Adrenal gland (tissue), 19 donors: ENCODE measurements at regions of chr3 and their contacts with region 1.

Region 1: DNA sequence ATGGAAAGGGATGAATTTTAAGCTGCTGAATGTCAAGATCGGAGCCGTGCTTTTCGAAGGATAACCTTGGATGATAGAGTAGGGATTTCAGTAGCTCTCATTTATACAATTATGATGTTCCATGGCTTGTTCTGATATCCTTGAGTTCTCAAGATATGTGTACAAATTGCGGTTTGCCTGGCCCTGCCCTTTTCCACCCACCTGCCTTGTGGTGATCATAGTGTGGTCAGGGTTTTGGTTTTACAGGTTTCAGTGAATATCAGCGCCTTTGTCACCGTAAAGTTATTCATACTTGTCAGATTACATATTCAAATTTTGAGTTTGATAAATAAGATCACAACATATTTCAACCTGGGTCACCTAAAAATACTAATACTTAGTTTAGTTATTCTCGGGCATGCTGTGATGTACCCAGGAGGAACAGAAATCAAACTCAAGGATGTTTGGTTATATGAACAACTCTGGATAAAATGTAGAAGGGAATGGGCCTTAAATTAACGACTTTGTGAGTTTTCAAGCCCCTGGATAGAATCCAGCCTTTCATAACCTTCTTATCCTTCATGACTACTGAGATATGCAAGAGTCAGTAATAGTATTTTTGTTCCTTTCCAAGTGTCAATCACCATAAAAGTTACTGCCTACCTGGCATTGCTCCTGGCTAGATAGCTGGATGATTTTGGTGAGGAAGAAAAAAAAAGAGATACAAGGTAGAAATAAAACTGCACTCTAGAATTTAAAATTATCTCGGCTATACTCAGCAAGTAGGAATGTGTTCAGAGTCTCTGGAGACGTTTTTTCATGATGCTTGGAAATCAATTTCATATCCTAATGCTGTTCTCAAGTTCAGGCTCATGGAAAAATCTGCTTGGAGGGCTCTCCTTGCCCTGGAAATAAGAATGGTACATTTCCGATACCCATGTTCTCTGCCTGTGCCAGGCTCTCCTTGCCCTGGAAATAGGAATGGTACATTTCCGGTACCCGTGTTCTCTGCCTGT is 209.2 kb upstream of the TPRG1 start:
- DNase-seq: no peak
- H3K4me3 ChIP-seq: no peak overlapping the region
- H3K27ac ChIP-seq: no peak overlapping the region
- H3K4me1 ChIP-seq: no peaks in the 10 kb centered on the region
- H3K27me3 ChIP-seq: no peaks in the 10 kb centered on the region
- CTCF ChIP-seq: no peak
- POLR2A ChIP-seq: no peak

Region 2: DNA sequence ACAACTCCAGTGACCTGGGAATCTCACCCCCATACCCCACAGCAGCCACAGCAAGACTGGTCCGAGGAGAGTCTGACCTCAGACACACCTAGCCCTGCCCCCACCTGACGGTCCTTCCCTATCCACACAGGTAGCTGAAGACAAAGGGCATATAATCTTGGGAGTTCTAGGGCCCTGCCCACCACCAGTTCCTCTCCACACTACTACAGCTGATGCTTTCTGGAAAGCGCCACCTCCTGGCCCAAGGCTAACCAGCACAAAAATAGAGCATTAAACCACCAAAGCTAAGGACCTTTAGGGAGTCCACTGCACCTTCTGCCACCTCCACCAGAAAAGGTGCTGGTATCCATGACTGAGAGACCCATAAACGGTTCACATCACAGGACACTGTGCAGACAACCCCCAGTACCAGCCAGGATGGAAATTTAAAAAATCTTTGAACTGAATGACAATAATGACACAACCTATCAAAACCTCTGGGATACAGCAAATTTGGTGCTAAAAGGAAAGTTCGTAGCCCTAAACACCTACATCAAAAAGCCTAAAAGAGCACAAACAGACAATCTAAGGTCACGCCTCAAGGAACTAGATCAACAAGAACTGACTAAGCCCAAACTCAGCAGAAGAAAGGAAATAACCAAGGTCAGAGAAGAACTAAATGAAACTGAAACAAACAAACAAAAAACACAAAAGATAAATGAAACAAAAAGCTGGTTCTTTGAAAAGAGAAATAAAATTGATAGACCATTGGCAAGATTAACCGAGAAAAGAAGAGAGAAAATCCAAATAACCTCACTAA is 87.1 kb after region 1 on chr3:
- intact Hi-C with region 1: no loop called
- DNase-seq: no peak
- H3K4me3 ChIP-seq: no peak overlapping the region
- H3K27ac ChIP-seq: no peak overlapping the region
- H3K4me1 ChIP-seq: peaks cover 0 to 5% of the 10 kb centered on the region in 2 donors
- H3K27me3 ChIP-seq: no peaks in the 10 kb centered on the region
- CTCF ChIP-seq: no peak
- POLR2A ChIP-seq: no peak

Region 3: GRCh38 chr3:189148081-189148507 is 185.5 kb after region 1 on chr3:
- intact Hi-C with region 1: loop called (anchors 5 kb)
- DNase-seq: peak; percentile 60 to 88 (median 67)
- H3K4me3 ChIP-seq: no peak overlapping the region
- H3K27ac ChIP-seq: peak overlapping the region in 1 of 5 donors; percentile 25
- H3K4me1 ChIP-seq: peaks cover 7 to 11% of the 10 kb centered on the region in 2 donors
- H3K27me3 ChIP-seq: no peaks in the 10 kb centered on the region
- CTCF ChIP-seq: peak; percentile 83 to 89 (median 85)
- POLR2A ChIP-seq: no peak